K562 (cell line): ENCODE measurements at regions of chr12 and their contacts with region 1.

Region 1: DNA sequence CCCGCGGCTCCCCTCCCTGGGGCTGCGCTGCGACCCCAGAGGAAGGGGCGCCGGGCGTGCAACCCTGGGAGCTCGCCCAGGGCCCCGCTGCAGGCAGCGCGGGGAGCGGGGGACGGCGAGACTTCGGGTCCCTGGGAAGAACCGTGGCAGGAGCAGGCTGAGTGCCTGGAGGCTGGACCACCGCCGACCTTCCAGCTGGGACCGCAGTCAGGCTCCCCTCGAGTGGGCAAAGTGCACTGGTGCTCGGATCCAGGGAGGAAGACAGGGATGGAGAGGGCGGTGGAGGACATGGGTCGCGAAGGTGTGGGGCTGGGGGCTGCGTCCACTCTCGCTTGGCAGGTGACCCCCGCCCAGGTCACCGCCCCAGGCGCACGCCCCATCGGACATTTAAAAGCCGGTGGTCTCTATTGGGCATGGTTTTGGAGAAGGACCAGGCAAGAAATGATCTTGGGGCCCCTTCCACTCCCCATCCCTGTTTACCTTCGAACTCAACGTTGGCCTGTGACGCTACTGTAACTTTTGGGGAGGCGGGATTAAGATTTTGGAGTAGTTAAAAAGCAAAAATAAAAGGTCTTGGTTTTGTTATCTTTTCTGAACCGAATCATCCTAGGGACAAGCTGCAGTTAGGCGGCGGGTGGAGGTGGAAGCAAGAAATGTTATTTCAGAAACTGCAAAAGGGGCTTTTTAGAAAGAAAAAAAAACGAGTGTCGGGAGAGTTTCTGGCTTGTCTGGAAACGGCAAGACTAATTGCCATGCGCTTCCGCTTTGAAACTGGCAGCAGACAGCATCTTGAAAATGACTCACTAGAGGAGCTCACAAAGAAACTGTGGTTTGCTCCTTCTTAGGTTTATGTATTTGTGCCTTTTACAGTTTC is 1.0 kb downstream of the ELK3 start:
- DNase-seq: peak in 2 of 4 experiments; percentile 38 to 69
- ATAC-seq: peak; percentile 66
- H3K4me3 ChIP-seq: peak overlapping the region; percentile 46
- H3K27ac ChIP-seq: peak overlapping the region; percentile 25; the same call in 1 of the 3 replicates
- H3K4me1 ChIP-seq: peaks cover 14% of the 10 kb centered on the region in 2 experiments
- H3K27me3 ChIP-seq: peaks cover 2 to 15% of the 10 kb centered on the region in 2 experiments; a peak in 4 of 5 replicates
- CTCF ChIP-seq: no peak
- EP300 ChIP-seq: no peak
- POLR2A ChIP-seq: no peak
- RAD21 ChIP-seq: no peak

Region 2: DNA sequence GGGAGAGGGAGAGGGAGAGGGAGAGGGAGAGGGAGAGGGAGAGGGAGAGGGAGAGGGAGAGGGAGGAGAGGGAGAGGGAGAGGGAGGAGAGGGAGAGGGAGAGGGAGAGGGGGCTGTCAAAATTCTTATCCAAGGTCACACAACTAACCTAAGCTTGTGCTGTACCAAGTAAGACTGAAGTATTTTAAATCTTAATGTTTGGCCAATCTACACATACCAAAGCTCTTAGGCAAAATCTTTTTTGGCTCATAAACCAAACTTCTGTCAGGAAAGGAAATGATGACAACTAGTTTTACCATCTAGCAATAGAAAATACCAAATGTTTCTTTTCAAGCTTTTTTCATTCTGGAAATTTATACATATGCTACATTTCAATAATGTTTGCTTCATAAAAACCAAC is 286.6 kb before region 1 on chr12:
- CTCF ChIA-PET with region 1: no interaction called
- POLR2A ChIA-PET with region 1: no interaction called
- in situ Hi-C with region 1: no loop called
- intact Hi-C with region 1: no loop called
- DNase-seq: no peak
- ATAC-seq: no peak
- H3K4me3 ChIP-seq: no peak overlapping the region
- H3K27ac ChIP-seq: no peak overlapping the region
- H3K4me1 ChIP-seq: no peaks in the 10 kb centered on the region
- H3K27me3 ChIP-seq: no peaks in the 10 kb centered on the region; a peak in 1 of 5 replicates
- CTCF ChIP-seq: no peak
- EP300 ChIP-seq: no peak
- POLR2A ChIP-seq: no peak
- RAD21 ChIP-seq: no peak

Region 3: GRCh38 chr12:96157427-96157826 is 37.8 kb before region 1 on chr12:
- CTCF ChIA-PET with region 1: no interaction called
- POLR2A ChIA-PET with region 1: no interaction called
- in situ Hi-C with region 1: no loop called
- intact Hi-C with region 1: loop called (anchors 5 kb)
- DNase-seq: no peak
- ATAC-seq: no peak
- H3K4me3 ChIP-seq: no peak overlapping the region
- H3K27ac ChIP-seq: no peak overlapping the region
- H3K4me1 ChIP-seq: 0 out of 5 replicates have a peak, but pooled peaks cover 0 to under 1% of the 10 kb centered on the region in 2 experiments
- H3K27me3 ChIP-seq: peaks cover 12 to 38% of the 10 kb centered on the region in 2 experiments; a peak in 4 of 5 replicates
- CTCF ChIP-seq: no peak
- EP300 ChIP-seq: no peak
- POLR2A ChIP-seq: no peak
- RAD21 ChIP-seq: no peak

Region 4: DNA sequence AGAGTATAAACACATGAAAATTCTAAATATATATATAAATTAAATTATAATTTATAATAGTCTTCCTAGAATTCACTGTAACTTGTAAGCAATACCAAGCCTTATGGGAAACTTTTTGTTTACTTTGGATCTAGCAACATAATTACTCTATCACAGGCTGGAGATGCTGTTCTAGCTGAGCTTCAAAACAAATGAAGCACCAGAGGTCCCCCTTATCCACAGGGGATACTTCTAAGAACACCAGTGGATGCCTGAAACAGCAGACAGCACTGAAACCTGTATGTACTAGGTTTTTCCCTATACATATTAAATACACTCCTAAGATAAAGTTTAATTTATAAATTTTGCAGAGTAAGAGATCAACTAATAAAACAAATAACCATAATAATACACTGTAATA is 108.4 kb after region 1 on chr12:
- CTCF ChIA-PET with region 1: no interaction called
- POLR2A ChIA-PET with region 1: no interaction called
- in situ Hi-C with region 1: no loop called
- intact Hi-C with region 1: no loop called
- DNase-seq: no peak
- ATAC-seq: peak; percentile 61; the same call in 2 of the 3 replicates
- H3K4me3 ChIP-seq: no peak overlapping the region
- H3K27ac ChIP-seq: no peak overlapping the region
- H3K4me1 ChIP-seq: no peaks in the 10 kb centered on the region
- H3K27me3 ChIP-seq: no peaks in the 10 kb centered on the region
- CTCF ChIP-seq: peak in 1 of 3 experiments; percentile 6; a peak in 1 of 6 replicates
- EP300 ChIP-seq: no peak
- POLR2A ChIP-seq: no peak
- RAD21 ChIP-seq: peak in 1 of 2 experiments; percentile 25; a peak in 3 of 4 replicates